Activated CD4-positive, alpha-beta memory T cell treated with anti-CD3 and anti-CD28 coated beads, Interleukin-2, amount 10 ng/mL, durations not matched to agents 7 days and 5 days (primary cell): ENCODE measurements at regions of chr22 and their contacts with region 1.

Region 1: GRCh38 chr22:30606455-30607299 is at the start of gene TCN2:
- DNase-seq: peak; percentile 65
- H3K4me3 Mint-ChIP-seq: peak within 1 kb of the TSS; percentile 74
- H3K27ac Mint-ChIP-seq: peak within 1 kb of the TSS; percentile 62
- H3K4me1 Mint-ChIP-seq: peaks cover 52% of the 10 kb centered on the region
- H3K27me3 Mint-ChIP-seq: peaks cover 1% of the 10 kb centered on the region
- total RNA-seq, gene TCN2: 1.7 to 1.9 TPM

Region 2: DNA sequence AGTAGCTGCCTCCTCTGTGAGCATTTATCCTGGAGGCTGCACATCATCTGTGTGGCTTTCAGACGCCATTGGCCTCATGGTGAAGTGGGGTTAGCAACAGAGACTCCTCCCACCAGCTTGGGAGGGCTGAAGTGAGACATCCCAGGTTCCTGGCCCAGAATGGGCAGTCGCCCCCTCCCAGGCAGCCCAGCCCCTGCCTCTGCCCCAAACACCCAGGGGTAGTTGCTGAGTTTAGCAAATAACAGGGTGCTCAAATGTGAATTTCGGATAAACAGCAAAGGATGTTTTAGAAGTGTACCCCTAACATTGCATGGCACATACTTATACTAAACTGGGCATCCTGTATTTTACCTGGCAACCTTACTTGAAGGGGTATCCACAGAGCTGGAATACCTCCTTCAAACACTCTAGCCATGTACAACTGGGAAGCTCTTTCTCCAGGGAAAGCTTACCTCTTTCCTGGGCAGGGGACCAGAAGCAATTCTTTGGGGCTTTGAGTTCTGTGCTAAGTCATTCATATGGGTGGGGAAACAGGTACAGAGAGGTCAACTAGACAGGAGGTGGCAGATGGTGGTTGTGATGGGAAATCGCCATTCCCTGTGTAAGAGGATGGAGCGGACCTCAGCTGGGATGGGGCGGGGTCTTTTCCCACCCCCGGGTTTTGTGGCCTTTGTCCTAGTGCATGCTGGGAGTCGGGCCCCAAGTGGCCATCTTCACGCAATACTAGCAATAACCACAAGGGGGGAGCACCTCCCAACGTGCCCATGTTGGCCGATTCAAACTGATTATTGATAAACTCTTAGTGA is 161.8 kb before region 1 on chr22:
- CTCF ChIA-PET with region 1: interaction called, 10 read pairs
- POLR2A ChIA-PET with region 1: no interaction called
- DNase-seq: peak; percentile 69
- H3K4me3 Mint-ChIP-seq: no peak overlapping the region
- H3K27ac Mint-ChIP-seq: no peak overlapping the region
- H3K4me1 Mint-ChIP-seq: peaks cover 34% of the 10 kb centered on the region
- H3K27me3 Mint-ChIP-seq: peaks cover 31% of the 10 kb centered on the region

Region 3: GRCh38 chr22:30506507-30506968 is 100.1 kb before region 1 on chr22:
- CTCF ChIA-PET with region 1: no interaction called
- POLR2A ChIA-PET with region 1: no interaction called
- DNase-seq: no peak
- H3K4me3 Mint-ChIP-seq: no peak overlapping the region
- H3K27ac Mint-ChIP-seq: no peak overlapping the region
- H3K4me1 Mint-ChIP-seq: no peaks in the 10 kb centered on the region
- H3K27me3 Mint-ChIP-seq: peaks cover 19% of the 10 kb centered on the region

Region 4: GRCh38 chr22:30591588-30592359 is 14.9 kb before region 1 on chr22 and contains the start of gene PES1:
- CTCF ChIA-PET with region 1: interaction called, 54 read pairs
- POLR2A ChIA-PET with region 1: interaction called, 11 read pairs
- DNase-seq: peak; percentile 95
- H3K4me3 Mint-ChIP-seq: no peak within 1 kb of the TSS
- H3K27ac Mint-ChIP-seq: no peak within 1 kb of the TSS
- H3K4me1 Mint-ChIP-seq: peaks cover 1% of the 10 kb centered on the region
- H3K27me3 Mint-ChIP-seq: peaks cover 10% of the 10 kb centered on the region
- total RNA-seq, gene PES1: 48.3 to 54.9 TPM